ENCODE measurements at regions of chr9 and their contacts with region 1.

Region 1: DNA sequence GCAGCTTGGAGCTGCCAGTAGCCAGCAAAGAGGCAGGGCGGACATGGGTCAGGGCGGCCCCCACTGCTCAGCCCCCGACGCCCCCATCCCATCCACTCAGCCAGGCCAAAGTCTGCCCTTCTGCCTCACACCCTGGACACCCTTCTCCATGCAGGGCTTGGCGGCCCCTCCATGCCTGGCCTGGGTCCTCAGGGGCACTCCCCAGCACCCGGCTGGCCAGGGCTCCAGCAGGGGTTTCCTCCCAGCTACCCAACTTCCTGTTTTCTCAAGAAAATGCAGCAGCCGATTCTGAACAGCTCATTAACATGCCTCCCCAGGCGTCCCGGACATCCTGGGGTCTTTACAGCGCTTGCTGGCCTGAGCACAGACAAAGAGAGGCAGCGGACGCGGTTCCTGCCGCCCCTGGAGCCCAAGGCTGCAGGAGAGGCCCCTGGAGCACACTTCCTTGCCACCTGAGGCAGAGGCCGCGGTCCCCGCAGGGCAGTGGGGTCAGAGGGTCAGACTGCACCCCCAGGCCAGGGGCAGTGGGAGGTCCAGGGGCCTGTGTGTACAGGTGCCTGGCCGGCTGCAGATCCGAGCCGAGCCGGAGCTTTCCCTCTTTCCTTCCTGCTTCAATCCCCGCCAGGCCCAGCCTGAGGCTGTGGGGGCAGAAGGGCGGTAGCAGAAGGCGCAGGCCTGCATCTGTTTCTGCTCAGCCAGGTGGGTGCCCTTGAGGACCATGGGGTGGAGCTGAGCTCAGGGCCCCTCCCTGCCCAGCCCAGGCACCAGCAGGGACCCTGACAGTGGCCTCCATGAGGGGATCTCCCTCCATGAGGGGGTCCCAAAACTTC is 18.7 kb upstream of the NRARP start:
- DNase-seq: no peak
- H3K4me3 ChIP-seq: no peak overlapping the region
- H3K27ac ChIP-seq: no peak overlapping the region
- H3K4me1 ChIP-seq: no peaks in the 10 kb centered on the region
- H3K27me3 ChIP-seq: no peaks in the 10 kb centered on the region
- CTCF ChIP-seq: no peak

Region 2: GRCh38 chr9:137269231-137269772 is 51.5 kb before region 1 on chr9:
- CTCF ChIA-PET with region 1: no interaction called
- dilution Hi-C with region 1: loop called (anchors 5 kb)
- in situ Hi-C with region 1: no loop called
- intact Hi-C with region 1: no loop called
- DNase-seq: no peak
- H3K4me3 ChIP-seq: no peak overlapping the region
- H3K27ac ChIP-seq: no peak overlapping the region
- H3K4me1 ChIP-seq: peaks cover 14% of the 10 kb centered on the region
- H3K27me3 ChIP-seq: no peaks in the 10 kb centered on the region
- CTCF ChIP-seq: no peak

Region 3: GRCh38 chr9:137417161-137418021 is 96.6 kb after region 1 on chr9:
- CTCF ChIA-PET with region 1: no interaction called
- dilution Hi-C with region 1: loop called (anchors 5 kb)
- in situ Hi-C with region 1: no loop called
- intact Hi-C with region 1: no loop called
- DNase-seq: no peak
- H3K4me3 ChIP-seq: peak overlapping the region in 2 of 3 experiments; percentile 6 to 10
- H3K27ac ChIP-seq: no peak overlapping the region
- H3K4me1 ChIP-seq: peaks cover 12% of the 10 kb centered on the region
- H3K27me3 ChIP-seq: no peaks in the 10 kb centered on the region
- CTCF ChIP-seq: no peak

Region 4: DNA sequence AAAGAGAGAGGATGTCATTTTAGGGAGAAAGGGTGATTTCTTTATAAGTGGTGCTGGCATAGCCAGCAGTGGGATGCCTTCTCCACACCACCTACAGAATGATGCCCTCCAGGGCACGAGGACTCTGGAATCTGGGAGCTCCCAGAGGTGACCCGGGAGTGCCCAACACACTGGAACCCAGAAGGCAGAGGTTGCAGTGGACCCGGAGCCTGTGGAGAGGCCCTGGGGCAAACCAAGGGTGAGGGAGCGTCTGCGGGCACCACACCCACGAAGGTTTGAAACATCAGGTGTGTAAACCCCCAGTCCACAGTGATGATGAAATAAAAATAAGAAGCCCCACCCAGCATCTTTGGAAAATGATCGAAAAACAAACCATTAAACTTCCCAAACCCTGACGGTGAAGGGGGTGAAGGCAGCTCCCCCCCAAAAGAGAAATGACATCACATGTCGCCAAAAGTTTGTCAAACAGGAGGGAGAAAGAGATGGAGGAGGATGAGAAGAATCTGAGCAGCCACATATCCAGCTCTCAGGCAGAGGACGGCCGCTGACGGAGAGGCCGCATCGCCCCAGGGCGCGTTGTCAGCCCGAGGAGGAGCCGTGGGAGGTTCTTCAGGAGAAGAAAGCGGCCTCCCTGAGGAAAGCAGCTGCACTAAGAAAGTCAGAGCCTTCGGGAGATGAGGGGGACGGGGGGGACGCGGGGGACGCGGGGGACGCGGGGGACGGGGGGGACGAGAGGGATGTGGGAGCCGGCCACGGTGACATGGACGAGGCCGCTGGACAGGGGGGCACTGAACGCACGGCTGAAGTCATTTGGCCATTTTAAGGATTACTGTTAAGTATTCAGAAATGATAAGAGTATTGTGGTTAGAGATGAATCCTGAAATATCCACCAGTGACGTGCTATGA is 181.5 kb after region 1 on chr9:
- CTCF ChIA-PET with region 1: no interaction called
- dilution Hi-C with region 1: loop called (anchors 10 kb)
- in situ Hi-C with region 1: no loop called
- intact Hi-C with region 1: no loop called
- DNase-seq: no peak
- H3K4me3 ChIP-seq: no peak overlapping the region
- H3K27ac ChIP-seq: no peak overlapping the region
- H3K4me1 ChIP-seq: no peaks in the 10 kb centered on the region
- H3K27me3 ChIP-seq: no peaks in the 10 kb centered on the region
- CTCF ChIP-seq: no peak

Measured in mammary epithelial cell (primary cell).